ENCODE measurements at regions of chrX and their contacts with region 1.

Region 1: GRCh38 chrX:48631350-48632090 is 34.2 kb downstream of the WDR13 start:
- DNase-seq: peak; percentile 66 to 93 (median 81)
- ATAC-seq: peak; percentile 99
- H3K4me3 ChIP-seq: peak overlapping the region; percentile 4; the same call in 1 of the 2 replicates
- H3K27ac ChIP-seq: peak overlapping the region; percentile 26; the same call in 1 of the 3 replicates
- H3K4me1 ChIP-seq: peaks cover 9% of the 10 kb centered on the region in 2 experiments; a peak in 4 of 5 replicates
- H3K27me3 ChIP-seq: no peaks in the 10 kb centered on the region
- CTCF ChIP-seq: peak; percentile 66 to 89 (median 78)
- EP300 ChIP-seq: peak; percentile 62
- POLR2A ChIP-seq: no peak
- RAD21 ChIP-seq: peak; percentile 93 to 94

Region 2: DNA sequence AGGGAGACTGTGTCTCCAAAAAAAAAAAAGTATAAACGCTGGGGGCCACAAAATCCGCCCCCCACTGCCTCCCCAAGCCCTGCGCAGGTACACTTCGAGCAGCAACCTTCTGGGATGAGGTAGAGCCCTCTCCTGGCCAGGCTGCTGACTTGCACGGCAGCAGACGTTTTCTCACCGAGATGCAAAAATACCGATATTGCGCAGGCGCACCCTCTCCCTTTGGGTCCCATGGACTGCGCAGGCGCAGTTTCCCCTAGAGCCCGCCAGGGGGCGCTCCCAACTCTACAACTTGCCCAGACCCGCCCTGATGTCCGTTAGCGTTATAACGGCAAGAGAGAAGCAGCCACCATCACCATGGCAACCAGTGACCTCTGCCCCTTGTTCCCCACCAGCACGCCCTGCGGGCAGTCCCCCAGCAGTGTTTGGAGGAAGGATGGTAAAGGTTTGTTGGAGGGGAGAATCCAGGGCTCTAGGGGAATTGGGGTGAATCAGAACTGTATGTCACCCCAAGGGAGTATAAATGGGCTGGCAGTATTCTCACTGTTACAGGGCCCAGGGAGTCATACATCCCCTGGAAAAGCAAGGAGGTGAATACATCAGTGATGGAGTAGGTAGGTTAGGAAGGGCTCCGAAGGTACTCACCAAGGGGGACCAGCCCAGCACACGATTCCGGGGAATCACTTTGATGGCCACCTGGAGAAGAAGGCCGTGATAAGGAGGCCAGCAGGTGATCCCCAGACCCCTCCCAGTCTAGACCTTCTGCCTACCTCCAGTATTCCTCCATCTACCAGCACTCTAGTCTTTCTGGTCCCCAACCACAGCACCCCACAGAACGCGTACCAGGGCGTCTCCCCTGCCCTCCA is 285.9 kb after region 1 on chrX:
- CTCF ChIA-PET with region 1: interaction called, 3 read pairs
- POLR2A ChIA-PET with region 1: no interaction called
- in situ Hi-C with region 1: no loop called
- intact Hi-C with region 1: loop called (anchors 10 kb)
- DNase-seq: peak; percentile 76 to 96 (median 86)
- ATAC-seq: peak; percentile 68
- H3K4me3 ChIP-seq: peak overlapping the region; percentile 89
- H3K27ac ChIP-seq: peak overlapping the region; percentile 77
- H3K4me1 ChIP-seq: peaks cover 37 to 47% of the 10 kb centered on the region in 2 experiments
- H3K27me3 ChIP-seq: no peaks in the 10 kb centered on the region; a peak in 1 of 5 replicates
- CTCF ChIP-seq: peak; percentile 85 to 98 (median 95)
- EP300 ChIP-seq: peak; percentile 86
- POLR2A ChIP-seq: no peak
- RAD21 ChIP-seq: peak in 1 of 2 experiments; percentile 67

Region 3: DNA sequence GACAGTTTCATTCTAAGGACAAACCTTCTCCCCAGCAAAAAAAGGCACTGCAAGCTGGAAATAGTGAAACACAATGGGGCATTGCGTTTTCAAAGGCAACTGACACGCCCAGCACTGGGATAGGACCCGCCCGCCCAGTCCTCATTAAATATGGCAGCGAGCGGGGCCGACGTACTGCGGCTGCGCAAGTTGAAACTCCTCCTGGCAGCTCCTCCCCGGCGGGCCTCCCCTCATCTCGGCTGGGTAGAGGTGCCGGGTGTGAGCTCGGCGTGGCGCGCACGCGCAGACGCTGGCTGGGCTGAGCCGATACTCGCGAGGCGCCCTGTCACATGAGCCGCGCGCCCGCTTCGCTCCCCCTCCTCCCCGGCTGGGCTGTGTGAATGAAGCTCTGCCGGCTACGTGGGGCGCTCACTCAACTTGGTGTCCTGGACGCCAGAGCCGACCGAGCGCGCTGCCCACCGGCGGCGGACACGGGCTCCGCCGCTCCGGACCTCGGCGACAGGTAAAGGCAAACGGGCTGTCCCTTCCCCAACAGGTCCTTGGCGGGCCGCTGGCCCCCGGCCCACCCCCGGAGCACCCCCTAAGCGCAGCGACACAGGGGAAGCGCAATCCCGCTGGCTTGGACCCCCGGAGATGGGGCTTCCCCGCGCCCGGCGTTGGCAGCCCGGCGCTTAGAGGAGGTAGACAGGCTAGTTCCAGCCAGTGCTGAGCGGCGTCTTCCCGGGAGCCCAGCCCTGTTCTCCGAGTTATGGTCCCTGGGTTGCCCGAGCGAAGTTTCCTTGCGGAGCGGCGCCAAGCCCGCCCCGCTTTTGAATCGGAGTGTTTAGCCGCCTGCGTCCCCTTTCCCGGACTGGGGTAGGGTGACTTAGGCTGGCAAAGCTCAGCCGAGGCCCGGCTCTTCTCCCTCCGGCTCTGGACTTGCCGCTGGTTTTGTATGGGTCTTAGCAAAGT is 1291.0 kb after region 1 on chrX and contains the start of gene CLCN5:
- CTCF ChIA-PET with region 1: no interaction called
- POLR2A ChIA-PET with region 1: no interaction called
- in situ Hi-C with region 1: loop called (anchors 25 kb)
- intact Hi-C with region 1: no loop called
- DNase-seq: peak; percentile 86 to 91 (median 88)
- ATAC-seq: peak; percentile 95
- H3K4me3 ChIP-seq: peak within 1 kb of the TSS; percentile 58
- H3K27ac ChIP-seq: peak within 1 kb of the TSS; percentile 68
- H3K4me1 ChIP-seq: peaks cover 6 to 8% of the 10 kb centered on the region in 2 experiments; a peak in 4 of 5 replicates
- H3K27me3 ChIP-seq: no peaks in the 10 kb centered on the region
- CTCF ChIP-seq: no peak
- EP300 ChIP-seq: no peak
- POLR2A ChIP-seq: 0 out of 2 replicates have a peak, but pooled peaks have one; percentile 38
- RAD21 ChIP-seq: no peak
- polyA plus RNA-seq, gene CLCN5: 0.94 to 1.6 TPM

Region 4: DNA sequence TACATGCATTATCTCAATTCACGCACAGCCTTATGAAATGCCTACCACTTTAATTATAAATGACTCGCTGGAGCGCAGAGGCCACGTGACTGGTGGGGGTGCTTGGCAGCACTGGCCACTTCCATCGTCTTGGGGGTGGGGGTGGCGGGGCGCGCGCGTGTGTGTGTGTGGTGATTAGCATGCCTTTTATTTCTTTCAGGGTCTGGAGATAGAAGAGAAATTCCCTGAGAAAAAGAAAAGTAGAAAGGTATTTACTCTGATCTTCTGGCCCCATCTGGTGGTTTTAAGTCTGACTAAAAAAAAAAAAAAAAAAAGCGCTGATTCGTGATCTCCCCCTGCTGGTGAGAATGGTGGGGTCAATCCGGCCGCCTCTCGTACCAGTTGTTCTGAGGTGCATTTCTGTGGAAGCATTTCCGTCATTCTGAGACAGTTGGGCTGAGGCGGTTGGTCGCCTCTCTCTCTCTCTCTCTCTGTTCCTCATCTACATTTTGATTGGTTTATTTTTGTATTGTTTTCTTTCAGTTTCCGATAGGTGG is 1572.9 kb after region 1 on chrX and contains the start of gene CCNB3:
- CTCF ChIA-PET with region 1: no interaction called
- POLR2A ChIA-PET with region 1: no interaction called
- in situ Hi-C with region 1: loop called (anchors 25 kb)
- intact Hi-C with region 1: loop called (anchors 2 kb)
- DNase-seq: peak; percentile 53 to 71 (median 62)
- ATAC-seq: peak; percentile 93
- H3K4me3 ChIP-seq: no peak within 1 kb of the TSS
- H3K27ac ChIP-seq: no peak within 1 kb of the TSS; the same call in 2 of the 3 replicates
- H3K4me1 ChIP-seq: peaks cover 0 to 5% of the 10 kb centered on the region in 2 experiments; a peak in 2 of 5 replicates
- H3K27me3 ChIP-seq: no peaks in the 10 kb centered on the region
- CTCF ChIP-seq: peak; percentile 83 to 99 (median 98)
- EP300 ChIP-seq: no peak
- POLR2A ChIP-seq: no peak
- RAD21 ChIP-seq: peak; percentile 55 to 69
- polyA plus RNA-seq, gene CCNB3: 0.06 TPM in 1 of 2 experiments, not detected in the other

Region 5: DNA sequence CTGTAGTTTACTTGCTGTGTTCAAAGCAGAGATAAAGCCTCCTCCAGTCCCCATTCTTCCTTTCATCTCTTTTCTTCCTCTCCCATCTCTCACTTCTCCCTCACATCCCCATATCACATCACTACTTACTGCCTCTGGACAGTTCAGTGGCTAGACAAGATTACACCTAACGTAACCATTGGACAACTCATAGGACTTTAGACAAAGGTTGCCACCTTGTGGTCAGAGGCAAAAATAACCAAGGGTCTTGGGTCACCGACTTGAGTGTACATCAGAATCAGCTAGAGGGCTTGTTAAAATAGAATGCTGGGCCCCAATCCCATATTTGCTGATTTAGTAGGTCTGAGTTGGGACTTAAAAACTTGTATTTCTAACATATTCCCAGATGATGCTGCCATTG is 1948.4 kb after region 1 on chrX:
- CTCF ChIA-PET with region 1: no interaction called
- POLR2A ChIA-PET with region 1: no interaction called
- in situ Hi-C with region 1: loop called (anchors 25 kb)
- intact Hi-C with region 1: no loop called
- DNase-seq: peak; percentile 25 to 62 (median 44)
- ATAC-seq: peak; percentile 87
- H3K4me3 ChIP-seq: no peak overlapping the region
- H3K27ac ChIP-seq: no peak overlapping the region
- H3K4me1 ChIP-seq: no peaks in the 10 kb centered on the region
- H3K27me3 ChIP-seq: no peaks in the 10 kb centered on the region
- CTCF ChIP-seq: peak; percentile 47 to 59 (median 56); a peak in 5 of 6 replicates
- EP300 ChIP-seq: no peak
- POLR2A ChIP-seq: no peak
- RAD21 ChIP-seq: peak; percentile 54 to 64